PC-9 (cell line): ENCODE measurements at regions of chr20 and their contacts with region 1.

Region 1: DNA sequence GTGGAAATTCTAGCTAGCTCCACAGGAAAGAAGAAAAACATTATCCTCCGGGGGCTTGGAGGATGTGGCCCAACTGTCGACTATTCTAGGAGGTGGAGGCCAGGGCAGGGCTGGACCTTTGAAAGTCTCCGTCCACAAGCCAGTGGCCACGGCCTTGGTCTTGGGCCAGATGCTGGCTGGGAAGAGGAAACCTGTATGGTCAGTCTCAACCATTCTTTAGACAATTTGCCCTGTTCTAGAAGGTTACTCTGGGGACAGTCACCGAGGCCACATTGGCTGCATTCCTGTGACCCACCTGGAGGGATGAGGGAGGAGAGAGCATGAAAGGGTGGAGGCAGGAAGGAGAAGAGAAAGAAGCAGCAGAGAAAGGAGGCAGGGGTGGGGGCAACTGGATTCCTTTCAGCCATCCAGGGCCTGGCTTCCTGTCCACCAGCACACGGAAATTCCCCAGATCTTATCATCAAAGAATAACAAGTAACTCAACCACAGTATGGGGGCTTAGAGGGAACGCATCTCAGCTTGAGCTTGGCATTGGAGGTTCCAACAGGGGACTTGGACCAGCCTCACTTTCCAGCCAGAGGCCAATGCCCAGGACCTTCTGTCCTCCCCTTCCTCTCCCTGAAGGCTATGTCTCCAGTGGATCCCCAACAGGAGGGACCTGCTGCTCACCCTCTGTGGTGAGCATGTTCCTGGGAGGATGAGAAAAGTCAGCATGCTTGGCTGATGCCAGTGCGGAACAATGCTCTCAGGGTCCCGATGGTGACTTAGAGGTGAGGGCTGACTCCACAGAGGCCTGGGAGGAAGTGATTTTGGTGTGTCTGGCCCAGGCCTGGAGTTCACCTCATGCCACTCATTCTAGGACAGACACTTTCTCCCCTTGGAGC is 30.4 kb downstream of the TGM2 start:
- DNase-seq: peak; percentile 95 to 96
- H3K4me3 ChIP-seq: no peak overlapping the region
- H3K27ac ChIP-seq: peak overlapping the region; percentile 92
- H3K4me1 ChIP-seq: peaks cover 65% of the 10 kb centered on the region
- H3K27me3 ChIP-seq: no peaks in the 10 kb centered on the region
- CTCF ChIP-seq: no peak

Region 2: GRCh38 chr20:38073307-38074071 is 61.1 kb before region 1 on chr20:
- CTCF ChIA-PET with region 1: interaction called, 4 read pairs
- POLR2A ChIA-PET with region 1: no interaction called
- intact Hi-C with region 1: loop called (anchors 2 kb)
- DNase-seq: peak; percentile 63 to 80
- H3K4me3 ChIP-seq: no peak overlapping the region
- H3K27ac ChIP-seq: peak overlapping the region; percentile 53
- H3K4me1 ChIP-seq: peaks cover 26% of the 10 kb centered on the region
- H3K27me3 ChIP-seq: no peaks in the 10 kb centered on the region
- CTCF ChIP-seq: peak; percentile 85

Region 3: GRCh38 chr20:38095017-38095686 is 39.5 kb before region 1 on chr20:
- CTCF ChIA-PET with region 1: no interaction called
- POLR2A ChIA-PET with region 1: no interaction called
- intact Hi-C with region 1: no loop called
- DNase-seq: no peak
- H3K4me3 ChIP-seq: no peak overlapping the region
- H3K27ac ChIP-seq: peak overlapping the region; percentile 64
- H3K4me1 ChIP-seq: peaks cover 24% of the 10 kb centered on the region
- H3K27me3 ChIP-seq: no peaks in the 10 kb centered on the region
- CTCF ChIP-seq: no peak

Region 4: GRCh38 chr20:38109591-38110524 is 24.8 kb before region 1 on chr20:
- CTCF ChIA-PET with region 1: interaction called, 4 read pairs
- POLR2A ChIA-PET with region 1: no interaction called
- intact Hi-C with region 1: loop called (anchors 1 kb)
- DNase-seq: peak; percentile 87 to 99
- H3K4me3 ChIP-seq: no peak overlapping the region; the same call in 1 of the 2 replicates
- H3K27ac ChIP-seq: peak overlapping the region; percentile 92
- H3K4me1 ChIP-seq: peaks cover 58% of the 10 kb centered on the region
- H3K27me3 ChIP-seq: no peaks in the 10 kb centered on the region
- CTCF ChIP-seq: no peak

Region 5: GRCh38 chr20:38152621-38153231 is 18.1 kb after region 1 on chr20:
- CTCF ChIA-PET with region 1: no interaction called
- POLR2A ChIA-PET with region 1: interaction called, 5 read pairs
- intact Hi-C with region 1: loop called (anchors 1 kb)
- DNase-seq: peak; percentile 90 to 98
- H3K4me3 ChIP-seq: no peak overlapping the region
- H3K27ac ChIP-seq: peak overlapping the region; percentile 55
- H3K4me1 ChIP-seq: peaks cover 51% of the 10 kb centered on the region
- H3K27me3 ChIP-seq: no peaks in the 10 kb centered on the region
- CTCF ChIP-seq: no peak

Region 6: DNA sequence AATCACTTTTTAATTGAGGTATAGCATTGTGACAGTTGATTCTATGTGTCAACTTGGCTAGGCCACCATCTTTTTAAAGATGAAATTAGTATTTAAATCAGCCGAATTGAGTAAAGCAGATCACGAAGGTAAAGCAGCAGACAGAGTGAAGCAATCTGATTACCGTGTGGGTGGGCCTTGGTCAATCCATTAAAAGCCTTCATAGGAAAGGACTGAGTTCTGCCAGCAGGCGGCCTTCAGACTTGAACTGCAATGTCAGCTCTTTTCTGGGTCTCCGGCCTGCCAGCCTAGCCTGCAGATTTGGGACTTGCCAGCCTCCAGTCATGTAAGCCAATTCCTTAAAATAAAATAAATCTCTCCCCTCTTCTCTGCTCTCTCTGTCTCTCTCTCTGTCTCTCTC is 52.9 kb after region 1 on chr20:
- CTCF ChIA-PET with region 1: no interaction called
- POLR2A ChIA-PET with region 1: no interaction called
- intact Hi-C with region 1: loop called (anchors 1 kb)
- DNase-seq: no peak
- H3K4me3 ChIP-seq: no peak overlapping the region
- H3K27ac ChIP-seq: peak overlapping the region; percentile 86
- H3K4me1 ChIP-seq: peaks cover 64% of the 10 kb centered on the region
- H3K27me3 ChIP-seq: no peaks in the 10 kb centered on the region
- CTCF ChIP-seq: no peak

Region 7: DNA sequence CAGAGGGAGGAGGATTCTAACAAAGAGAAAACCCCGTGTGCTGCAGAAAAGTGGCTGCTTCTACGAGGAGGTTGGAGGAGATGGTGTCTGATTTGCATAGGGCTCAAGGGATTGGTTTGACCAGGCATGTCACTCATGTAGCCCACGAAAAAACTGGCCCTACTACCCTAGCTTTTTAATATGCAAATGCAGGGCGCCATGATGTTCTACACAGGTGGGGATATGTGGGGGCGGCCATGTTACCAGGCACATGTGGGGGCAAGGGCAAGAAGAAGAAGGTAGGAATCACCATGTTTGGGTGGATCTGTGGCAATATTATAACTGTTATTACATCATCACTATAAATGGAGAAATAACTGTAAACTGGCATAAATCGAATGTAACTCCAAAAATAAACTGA is 116.0 kb after region 1 on chr20:
- CTCF ChIA-PET with region 1: no interaction called
- POLR2A ChIA-PET with region 1: interaction called, 13 read pairs
- intact Hi-C with region 1: no loop called
- DNase-seq: peak in 1 of 2 experiments; percentile 34
- H3K4me3 ChIP-seq: no peak overlapping the region
- H3K27ac ChIP-seq: no peak overlapping the region
- H3K4me1 ChIP-seq: no peaks in the 10 kb centered on the region
- H3K27me3 ChIP-seq: no peaks in the 10 kb centered on the region
- CTCF ChIP-seq: no peak

Region 8: DNA sequence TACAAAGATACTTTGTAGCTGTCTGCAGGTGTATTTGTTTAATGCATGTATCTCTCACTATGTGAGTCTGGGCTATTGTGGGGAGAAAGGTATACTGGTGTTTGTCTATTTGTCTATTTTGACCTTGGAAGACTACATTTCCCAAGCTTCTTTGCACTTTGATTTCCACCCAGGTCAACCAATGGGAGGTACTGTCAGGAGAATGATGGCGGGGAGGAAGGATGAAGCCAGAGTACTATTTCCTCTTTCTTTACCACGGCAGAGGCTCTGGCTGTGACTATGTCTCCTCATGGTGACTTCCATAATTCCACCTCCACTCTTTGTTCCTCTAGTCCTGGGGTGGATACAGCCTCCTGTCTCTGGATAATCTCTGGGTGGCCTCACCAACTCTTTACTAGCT is 234.8 kb after region 1 on chr20:
- CTCF ChIA-PET with region 1: no interaction called
- POLR2A ChIA-PET with region 1: no interaction called
- intact Hi-C with region 1: no loop called
- DNase-seq: no peak
- H3K4me3 ChIP-seq: no peak overlapping the region
- H3K27ac ChIP-seq: no peak overlapping the region
- H3K4me1 ChIP-seq: no peaks in the 10 kb centered on the region
- H3K27me3 ChIP-seq: peaks cover 44% of the 10 kb centered on the region
- CTCF ChIP-seq: no peak